ENCODE measurements at regions of chr6 and their contacts with region 1.

Region 1: GRCh38 chr6:87929843-87930288 is 117.8 kb upstream of the SPACA1 start:
- DNase-seq: peak; percentile 71 to 85
- ATAC-seq: peak; percentile 85 to 97 (median 92)
- H3K4me3 ChIP-seq: no peak overlapping the region
- H3K27ac ChIP-seq: no peak overlapping the region
- H3K4me1 ChIP-seq: peaks cover 10% of the 10 kb centered on the region
- H3K27me3 ChIP-seq: no peaks in the 10 kb centered on the region
- CTCF ChIP-seq: peak; percentile 81

Region 2: GRCh38 chr6:88165844-88166492 is 236.1 kb after region 1 on chr6 and contains the start of gene CNR1:
- intact Hi-C with region 1: loop called in 1 of 2 experiments (anchors 10 kb)
- DNase-seq: peak; percentile 44 to 70
- ATAC-seq: peak; percentile 63 to 85 (median 78)
- H3K4me3 ChIP-seq: peak within 1 kb of the TSS; percentile 68
- H3K27ac ChIP-seq: no peak within 1 kb of the TSS
- H3K4me1 ChIP-seq: peaks cover 7% of the 10 kb centered on the region
- H3K27me3 ChIP-seq: peaks cover 2 to 81% (median 20%) of the 10 kb centered on the region in 3 donors
- CTCF ChIP-seq: no peak
- total RNA-seq, gene CNR1: 0.15 to 2.5 (median 1.8) TPM

Region 3: DNA sequence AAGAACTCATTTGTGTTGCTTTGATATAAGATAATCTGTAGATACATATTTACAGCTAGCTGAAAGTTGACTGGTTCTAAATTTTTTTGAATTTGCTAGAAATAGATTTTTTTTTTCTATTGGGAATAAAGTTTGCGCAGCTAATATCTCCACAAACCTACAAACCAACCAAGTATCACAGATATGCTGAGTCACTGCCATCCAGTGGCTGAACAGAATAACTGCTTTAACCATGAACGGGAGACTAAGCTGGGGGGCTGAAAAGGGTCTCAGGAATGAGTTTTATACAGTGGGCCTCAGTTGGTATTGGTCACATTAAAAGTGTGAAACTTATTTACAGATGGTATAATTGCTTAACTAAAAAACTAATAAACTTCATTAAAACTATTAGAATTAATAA is 563.0 kb after region 1 on chr6:
- intact Hi-C with region 1: loop called in 1 of 2 experiments (anchors 5 kb)
- DNase-seq: no peak
- ATAC-seq: no peak
- H3K4me3 ChIP-seq: no peak overlapping the region
- H3K27ac ChIP-seq: no peak overlapping the region
- H3K4me1 ChIP-seq: no peaks in the 10 kb centered on the region
- H3K27me3 ChIP-seq: no peaks in the 10 kb centered on the region
- CTCF ChIP-seq: no peak

Region 4: DNA sequence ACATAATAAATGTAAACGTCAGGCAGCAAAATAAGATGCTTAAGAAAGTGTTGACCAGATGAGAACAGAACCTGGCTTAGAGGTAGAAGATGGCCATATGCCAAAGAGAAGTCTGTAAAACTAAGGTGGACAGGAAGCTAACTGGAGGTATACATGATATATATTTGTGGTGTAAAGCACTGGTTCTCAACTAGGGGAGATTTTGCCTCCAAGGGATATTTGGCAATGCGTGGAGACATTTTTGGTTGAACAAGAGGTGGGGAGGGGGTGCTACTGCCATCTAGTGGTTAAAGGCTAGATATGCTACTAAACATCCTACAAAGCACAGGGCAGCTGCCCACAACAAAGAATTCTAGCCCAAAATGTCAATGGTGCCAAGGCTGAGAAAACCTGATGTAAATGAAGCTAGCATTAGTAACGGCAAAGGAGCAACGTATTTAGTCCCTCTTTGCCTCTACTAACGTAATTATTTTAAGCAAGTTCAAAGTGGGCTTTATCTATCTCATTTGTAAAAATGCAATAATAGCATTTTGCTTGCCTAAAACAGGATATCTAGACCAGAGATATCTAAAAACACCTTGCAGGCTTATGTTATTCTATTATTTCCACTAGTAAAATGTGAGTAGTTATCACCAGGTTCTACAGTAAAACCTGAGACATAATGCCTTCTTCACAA is 851.0 kb after region 1 on chr6:
- intact Hi-C with region 1: loop called in 1 of 2 experiments (anchors 5 kb)
- DNase-seq: no peak
- ATAC-seq: peak in 3 of 4 donors; percentile 59 to 77 (median 72)
- H3K4me3 ChIP-seq: no peak overlapping the region
- H3K27ac ChIP-seq: no peak overlapping the region
- H3K4me1 ChIP-seq: no peaks in the 10 kb centered on the region
- H3K27me3 ChIP-seq: no peaks in the 10 kb centered on the region
- CTCF ChIP-seq: peak; percentile 81

Region 5: DNA sequence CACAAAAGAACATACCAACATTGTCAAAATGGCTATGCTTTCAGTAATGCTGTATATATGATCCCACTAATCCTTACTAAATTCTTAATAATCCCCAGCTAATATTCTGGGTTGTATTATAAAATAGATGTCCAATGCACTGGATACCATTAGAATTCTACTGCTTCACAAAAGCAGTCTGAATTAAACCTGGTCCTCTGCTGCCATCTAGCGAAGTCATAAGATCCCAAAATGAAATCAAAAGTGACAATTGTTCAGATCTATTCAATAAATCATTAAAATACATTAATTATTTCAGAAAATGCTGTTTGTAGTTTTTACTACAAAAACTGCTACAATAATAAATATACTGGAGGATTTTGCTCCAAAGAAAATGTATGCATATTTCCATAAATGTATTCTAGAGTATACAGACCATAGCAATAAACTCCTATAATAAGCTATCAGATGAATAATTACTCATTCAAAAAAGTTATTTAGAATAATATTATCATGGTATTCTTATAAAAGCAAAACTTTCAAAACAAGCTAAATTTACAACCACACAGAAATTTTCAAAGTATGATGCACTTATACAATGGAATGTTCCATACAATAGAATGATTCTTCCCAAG is 941.0 kb after region 1 on chr6:
- intact Hi-C with region 1: loop called (anchors 2 to 5 kb)
- DNase-seq: no peak
- ATAC-seq: peak in 3 of 4 donors; percentile 54 to 85 (median 62)
- H3K4me3 ChIP-seq: no peak overlapping the region
- H3K27ac ChIP-seq: no peak overlapping the region
- H3K4me1 ChIP-seq: peaks cover 18% of the 10 kb centered on the region
- H3K27me3 ChIP-seq: no peaks in the 10 kb centered on the region
- CTCF ChIP-seq: peak; percentile 80